ENCODE measurements at regions of chr6 and their contacts with region 1.

Region 1: DNA sequence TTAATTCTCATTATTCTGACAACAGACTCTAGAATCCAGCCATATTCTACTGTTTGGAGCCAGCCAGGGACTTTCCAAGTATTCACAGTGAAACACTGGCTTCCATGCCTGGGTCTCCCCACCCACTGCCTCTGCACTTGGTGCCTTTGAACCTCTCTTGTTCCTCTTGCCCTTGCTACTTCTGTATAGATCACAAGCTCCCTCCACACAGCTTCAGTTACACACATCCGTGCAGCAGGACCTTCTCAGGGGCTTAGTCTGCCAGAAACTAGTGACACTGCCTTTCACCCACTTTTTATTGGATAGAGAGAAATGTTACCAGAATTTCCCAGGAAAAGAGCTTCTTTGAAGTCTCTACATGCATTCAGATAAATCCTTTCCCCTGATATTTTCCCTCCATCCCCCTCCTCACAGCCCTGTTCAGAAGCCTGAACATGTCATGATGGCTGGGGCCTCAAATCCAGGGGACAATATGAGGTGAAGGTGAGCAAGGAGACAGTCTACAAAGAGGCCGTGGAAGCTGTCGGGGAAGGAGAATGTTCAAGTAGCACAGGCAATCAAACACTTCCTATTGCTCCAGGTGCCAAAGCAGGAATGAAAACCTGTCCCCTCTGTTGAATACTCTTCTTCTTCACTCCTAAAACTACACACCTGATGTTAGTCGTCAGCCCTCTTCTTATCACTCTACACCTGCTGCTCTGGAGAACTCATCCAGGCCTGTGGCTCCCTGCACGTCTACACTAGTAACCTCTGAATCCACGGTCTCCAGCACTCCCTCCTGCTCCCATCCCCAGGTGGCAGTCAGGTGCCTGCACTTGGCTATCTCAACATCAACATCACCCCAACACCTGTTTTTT is 20.2 kb upstream of the HLA-DOA start:
- DNase-seq: peak; percentile 56
- ATAC-seq: peak; percentile 77
- H3K4me3 Mint-ChIP-seq: peak overlapping the region; percentile 77
- H3K27ac Mint-ChIP-seq: peak overlapping the region; percentile 100
- H3K4me1 Mint-ChIP-seq: peaks cover 81% of the 10 kb centered on the region
- H3K27me3 Mint-ChIP-seq: no peaks in the 10 kb centered on the region
- CTCF ChIP-seq: no peak

Region 2: DNA sequence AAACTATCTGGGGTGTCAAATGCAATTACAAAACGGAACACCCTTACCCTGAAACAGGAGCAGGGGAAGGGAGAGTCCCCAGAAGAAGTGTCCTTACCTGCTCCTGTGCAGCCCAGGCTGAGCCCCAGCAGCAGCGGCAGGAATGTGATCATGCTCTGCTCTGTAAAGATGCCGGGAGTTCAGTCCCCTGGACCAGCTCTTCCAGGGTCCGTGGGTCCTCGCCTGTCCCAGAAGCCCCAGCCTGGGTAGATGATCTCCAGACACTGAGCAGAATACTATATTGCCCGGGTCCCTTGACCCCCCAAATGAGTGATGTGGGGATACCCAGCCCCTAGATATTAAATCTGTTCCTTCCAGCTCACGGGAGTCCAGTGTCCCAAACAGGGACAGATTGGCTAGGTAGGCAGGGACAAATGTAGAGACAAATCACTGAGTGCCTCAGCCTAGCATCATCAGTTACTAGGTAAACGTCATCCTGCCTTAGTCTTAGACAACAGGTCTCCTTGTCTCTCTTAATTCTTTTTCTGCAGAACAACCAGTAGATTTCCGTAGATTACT is 88.8 kb before region 1 on chr6 and contains the start of gene HLA-DMB:
- CTCF ChIA-PET with region 1: no interaction called
- POLR2A ChIA-PET with region 1: interaction called, 6 read pairs
- intact Hi-C with region 1: loop called (anchors 1 kb)
- DNase-seq: peak; percentile 53
- ATAC-seq: peak; percentile 60
- H3K4me3 Mint-ChIP-seq: peak within 1 kb of the TSS; percentile 98
- H3K27ac Mint-ChIP-seq: peak within 1 kb of the TSS; percentile 99
- H3K4me1 Mint-ChIP-seq: peaks cover 85% of the 10 kb centered on the region
- H3K27me3 Mint-ChIP-seq: no peaks in the 10 kb centered on the region
- CTCF ChIP-seq: no peak
- total RNA-seq, gene HLA-DMB: 341 and 365 TPM in 2 replicates

Region 3: DNA sequence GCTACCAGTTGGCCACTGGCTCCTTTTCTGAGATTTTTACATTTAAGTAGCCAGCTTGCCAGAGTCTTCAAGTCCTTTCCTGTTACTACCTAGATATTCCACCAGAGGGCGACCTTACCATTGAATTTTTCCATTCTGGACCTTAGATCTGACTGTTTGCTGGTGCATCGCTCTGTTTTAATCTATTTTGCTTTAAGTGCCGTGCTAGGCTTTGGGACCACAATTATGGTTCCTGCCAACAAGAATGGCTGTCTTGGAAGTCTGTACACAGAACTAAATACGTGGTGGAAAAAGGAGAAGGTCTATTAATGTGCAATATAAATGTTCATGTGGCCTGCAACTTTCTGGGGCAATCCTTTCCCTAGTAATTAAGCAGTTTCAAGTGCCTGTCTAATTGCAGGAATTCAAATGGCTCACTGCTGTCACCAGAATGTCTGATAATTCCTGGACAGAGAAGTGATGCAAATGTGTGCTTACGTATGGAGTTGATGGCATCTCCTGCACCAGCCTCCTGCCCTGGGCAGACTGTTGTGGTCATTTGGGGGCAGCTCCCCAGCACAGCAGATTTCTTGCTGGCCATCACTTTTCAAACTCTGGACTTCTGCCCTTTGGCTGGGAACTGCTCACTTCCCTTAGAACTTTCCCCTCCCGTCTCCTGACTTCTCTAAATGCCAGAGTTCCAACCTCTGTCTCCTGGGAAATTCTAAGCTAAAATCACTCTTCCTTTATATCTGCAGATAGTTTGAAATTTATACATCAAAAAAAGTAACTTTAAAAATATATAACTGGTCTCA is 14.5 kb before region 1 on chr6:
- CTCF ChIA-PET with region 1: interaction called, 19 read pairs
- POLR2A ChIA-PET with region 1: interaction called, 334 read pairs
- intact Hi-C with region 1: loop called (anchors 1 kb)
- DNase-seq: no peak
- ATAC-seq: peak; percentile 34
- H3K4me3 Mint-ChIP-seq: peak overlapping the region; percentile 71
- H3K27ac Mint-ChIP-seq: peak overlapping the region; percentile 98
- H3K4me1 Mint-ChIP-seq: peaks cover 69% of the 10 kb centered on the region
- H3K27me3 Mint-ChIP-seq: no peaks in the 10 kb centered on the region
- CTCF ChIP-seq: no peak

Region 4: GRCh38 chr6:33049323-33050013 is 19.9 kb after region 1 on chr6:
- CTCF ChIA-PET with region 1: interaction called, 3 read pairs
- POLR2A ChIA-PET with region 1: interaction called, 104 read pairs
- intact Hi-C with region 1: no loop called
- DNase-seq: no peak
- ATAC-seq: no peak
- H3K4me3 Mint-ChIP-seq: no peak overlapping the region
- H3K27ac Mint-ChIP-seq: no peak overlapping the region
- H3K4me1 Mint-ChIP-seq: peaks cover 20% of the 10 kb centered on the region
- H3K27me3 Mint-ChIP-seq: no peaks in the 10 kb centered on the region
- CTCF ChIP-seq: no peak

Region 5: GRCh38 chr6:33208091-33208967 is 178.8 kb after region 1 on chr6 and contains the start of gene RING1:
- CTCF ChIA-PET with region 1: no interaction called
- POLR2A ChIA-PET with region 1: interaction called, 10 read pairs
- intact Hi-C with region 1: no loop called
- DNase-seq: peak; percentile 88
- ATAC-seq: peak; percentile 51
- H3K4me3 Mint-ChIP-seq: peak within 1 kb of the TSS; percentile 87
- H3K27ac Mint-ChIP-seq: peak within 1 kb of the TSS; percentile 82
- H3K4me1 Mint-ChIP-seq: peaks cover 45% of the 10 kb centered on the region
- H3K27me3 Mint-ChIP-seq: peaks cover 13% of the 10 kb centered on the region
- CTCF ChIP-seq: no peak
- total RNA-seq, gene RING1: 41.7 and 43.8 TPM in 2 replicates

Measured in activated B cell treated with CpG ODN at 0.5 μM for 24 hours (primary cell).